AG04449 (cell line): ENCODE measurements at regions of chr11 and their contacts with region 1.

Region 1: GRCh38 chr11:61816736-61817455 is at the start of gene FADS1:
- DNase-seq: peak; percentile 60
- H3K4me3 ChIP-seq: peak within 1 kb of the TSS; percentile 82
- CTCF ChIP-seq: peak; percentile 89

Region 2: DNA sequence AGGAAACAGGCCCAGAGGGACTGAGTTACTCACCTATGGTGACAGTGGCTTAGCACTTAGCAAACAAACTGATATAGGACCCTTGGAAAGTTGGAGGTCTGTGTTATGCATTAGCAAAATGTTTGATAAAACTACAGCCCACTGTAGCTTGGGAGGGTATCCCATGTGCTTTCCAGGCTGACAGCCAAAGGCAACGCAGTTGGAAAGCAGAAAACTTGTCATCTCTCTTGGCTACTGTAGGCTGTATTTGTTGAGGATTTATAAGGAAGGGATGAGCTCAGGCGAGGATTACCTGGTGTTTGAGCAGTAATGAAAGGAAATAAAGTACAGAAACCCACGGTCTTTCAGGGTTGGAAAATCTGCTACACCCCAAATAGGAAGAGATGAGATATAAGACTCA is 363.2 kb before region 1 on chr11:
- CTCF ChIA-PET with region 1: no interaction called
- POLR2A ChIA-PET with region 1: no interaction called
- DNase-seq: no peak
- H3K4me3 ChIP-seq: no peak overlapping the region
- CTCF ChIP-seq: no peak

Region 3: GRCh38 chr11:61803889-61804647 is 12.8 kb before region 1 on chr11:
- CTCF ChIA-PET with region 1: interaction called, 91 read pairs
- POLR2A ChIA-PET with region 1: interaction called, 5 read pairs
- DNase-seq: no peak
- H3K4me3 ChIP-seq: no peak overlapping the region
- CTCF ChIP-seq: no peak

Region 4: GRCh38 chr11:61827571-61828378 is 10.9 kb after region 1 on chr11 and contains the start of gene FADS2:
- CTCF ChIA-PET with region 1: interaction called, 58 read pairs
- POLR2A ChIA-PET with region 1: interaction called, 14 read pairs
- DNase-seq: peak; percentile 62
- H3K4me3 ChIP-seq: peak within 1 kb of the TSS; percentile 84
- CTCF ChIP-seq: peak; percentile 23